ENCODE measurements at regions of chr17 and their contacts with region 1.

Region 1: GRCh38 chr17:69574257-69575197 is 160.0 kb downstream of the MAP2K6 start:
- DNase-seq: no peak
- H3K4me3 ChIP-seq: no peak overlapping the region
- H3K27ac ChIP-seq: no peak overlapping the region
- H3K4me1 ChIP-seq: no peaks in the 10 kb centered on the region
- H3K27me3 ChIP-seq: no peaks in the 10 kb centered on the region
- CTCF ChIP-seq: no peak

Region 2: DNA sequence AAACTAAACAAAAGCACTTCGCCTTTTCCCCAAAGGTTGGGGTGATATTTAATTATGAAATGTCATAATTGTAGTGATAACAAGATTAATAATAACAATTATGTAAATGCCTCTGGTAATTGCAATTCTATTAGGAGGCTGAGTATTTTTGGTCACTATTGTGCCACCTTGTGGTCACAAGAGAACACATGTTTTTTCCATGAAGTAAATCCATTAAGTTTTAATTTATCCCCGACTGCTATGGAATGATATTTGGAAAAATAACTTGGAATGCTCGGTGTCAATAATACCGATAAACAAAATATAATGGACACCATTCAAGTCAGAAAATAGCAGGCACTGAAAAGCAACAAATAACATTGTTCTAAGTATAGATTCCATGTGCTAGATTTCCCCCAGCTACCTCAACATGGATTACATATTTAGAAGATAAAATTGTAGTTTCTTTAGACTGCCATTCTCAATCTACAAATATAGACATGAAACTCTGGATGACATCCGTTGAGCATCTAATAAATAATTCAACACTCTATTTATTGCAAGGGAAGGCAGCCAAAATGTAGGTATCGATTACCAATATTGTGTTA is 569.8 kb after region 1 on chr17:
- CTCF ChIA-PET with region 1: no interaction called
- dilution Hi-C with region 1: no loop called
- in situ Hi-C with region 1: no loop called
- intact Hi-C with region 1: loop called (anchors 1 kb)
- DNase-seq: peak; percentile 16
- H3K4me3 ChIP-seq: no peak overlapping the region
- H3K27ac ChIP-seq: no peak overlapping the region
- H3K4me1 ChIP-seq: no peaks in the 10 kb centered on the region
- H3K27me3 ChIP-seq: no peaks in the 10 kb centered on the region
- CTCF ChIP-seq: peak; percentile 55 to 66

Region 3: GRCh38 chr17:70622368-70623260 is 1048.1 kb after region 1 on chr17:
- CTCF ChIA-PET with region 1: no interaction called
- dilution Hi-C with region 1: no loop called
- in situ Hi-C with region 1: no loop called
- intact Hi-C with region 1: loop called (anchors 1 kb)
- DNase-seq: peak; percentile 30
- H3K4me3 ChIP-seq: no peak overlapping the region
- H3K27ac ChIP-seq: no peak overlapping the region
- H3K4me1 ChIP-seq: no peaks in the 10 kb centered on the region
- H3K27me3 ChIP-seq: no peaks in the 10 kb centered on the region
- CTCF ChIP-seq: peak; percentile 67 to 85